Lower leg skin (tissue), 4 donors: ENCODE measurements at regions of chr4 and their contacts with region 1.

Region 1: DNA sequence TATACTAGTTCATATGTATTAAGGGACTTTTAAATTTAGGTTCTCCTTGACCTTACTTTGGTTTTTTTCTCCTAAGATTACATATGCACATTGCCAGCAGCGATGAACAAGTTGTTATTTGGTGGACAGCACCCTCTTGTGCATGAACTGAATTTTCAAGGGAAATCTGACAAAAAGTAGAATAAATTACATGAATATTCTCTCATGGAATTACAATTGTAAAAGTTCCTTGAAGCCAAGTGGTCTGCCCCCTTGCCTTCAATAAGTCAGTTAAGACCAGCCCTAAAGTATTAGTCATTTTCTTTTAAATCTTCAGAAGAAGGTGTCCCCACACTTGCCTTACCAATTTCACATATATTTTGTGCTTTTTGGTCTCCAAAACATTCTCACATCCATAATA is 30.7 kb upstream of the SMARCA5 start:
- DNase-seq: no peak
- H3K4me3 ChIP-seq: no peak overlapping the region
- CTCF ChIP-seq: no peak
- POLR2A ChIP-seq: no peak

Region 2: DNA sequence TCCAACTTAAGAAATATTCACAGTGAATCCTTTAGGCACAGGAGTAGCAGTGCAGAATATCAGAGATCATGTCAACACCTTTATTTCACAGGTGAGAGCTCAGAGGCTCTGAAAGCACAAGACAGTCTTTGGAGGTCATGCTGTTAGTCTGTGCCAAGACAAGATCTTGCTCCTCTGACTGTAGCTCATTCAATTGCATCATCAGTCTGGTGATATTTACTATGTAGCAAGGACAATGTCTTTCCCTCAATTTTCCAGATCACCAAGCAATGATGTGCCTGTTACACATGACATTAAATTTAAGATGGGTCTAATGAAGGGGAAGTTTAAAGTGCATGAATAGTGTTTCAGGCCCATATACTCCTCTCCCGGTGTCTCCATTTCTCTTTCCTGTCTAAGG is 1568.9 kb before region 1 on chr4:
- intact Hi-C with region 1: no loop called
- DNase-seq: no peak
- H3K4me3 ChIP-seq: no peak overlapping the region
- CTCF ChIP-seq: no peak
- POLR2A ChIP-seq: no peak

Region 3: DNA sequence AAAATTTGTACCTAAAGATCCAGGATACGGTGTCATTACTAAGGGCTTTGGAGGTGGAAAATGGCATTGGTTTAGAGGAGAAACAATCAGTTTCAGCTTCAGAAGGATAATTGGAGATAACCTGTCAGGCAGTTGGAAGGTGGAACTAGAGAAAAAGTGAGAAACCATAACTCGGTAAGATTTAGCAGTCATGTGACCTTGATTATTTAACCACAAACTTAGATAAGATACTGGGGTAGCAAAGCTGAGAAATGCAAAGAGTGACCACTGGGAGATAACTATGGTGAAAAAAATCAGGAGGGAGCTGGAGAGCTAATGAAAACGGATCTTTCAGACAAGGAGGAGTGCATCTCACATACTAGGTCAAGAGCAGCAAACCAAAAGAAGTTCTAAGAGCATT is 27.6 kb before region 1 on chr4:
- intact Hi-C with region 1: loop called (anchors 2 kb)
- DNase-seq: no peak
- H3K4me3 ChIP-seq: no peak overlapping the region
- CTCF ChIP-seq: no peak
- POLR2A ChIP-seq: no peak

Region 4: GRCh38 chr4:143554728-143555597 is 72.1 kb after region 1 on chr4:
- intact Hi-C with region 1: no loop called
- DNase-seq: no peak
- H3K4me3 ChIP-seq: no peak overlapping the region
- CTCF ChIP-seq: no peak
- POLR2A ChIP-seq: no peak